GM12878 (cell line): ENCODE measurements at regions of chr7 and their contacts with region 1.

Region 1: DNA sequence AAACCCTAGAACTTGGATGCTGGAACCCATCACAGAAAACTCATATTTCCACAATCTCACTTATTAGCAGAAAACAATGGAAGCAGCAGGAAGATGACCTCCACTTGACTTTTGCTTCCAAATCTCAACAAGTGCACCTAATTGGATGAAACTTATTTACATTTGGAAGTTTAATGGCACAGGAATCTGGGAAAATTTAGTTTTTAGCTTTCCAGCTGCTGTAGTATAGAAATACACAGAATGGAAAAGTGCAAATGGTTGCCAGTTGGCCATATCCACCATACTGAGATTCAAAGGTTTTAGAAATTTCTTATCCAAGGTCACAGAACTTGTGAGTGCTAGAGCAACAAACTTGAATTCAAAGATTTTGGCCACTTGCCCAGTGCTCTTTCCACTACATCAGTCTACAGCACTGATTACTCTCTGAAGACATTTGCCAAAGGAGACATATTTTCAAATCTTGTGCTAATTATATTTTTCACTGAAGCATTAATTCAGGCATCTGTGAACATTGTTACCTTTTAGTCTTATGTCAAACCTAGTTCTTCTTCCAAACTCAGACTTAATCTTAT is 9.3 kb upstream of the AHR start:
- DNase-seq: no peak
- ATAC-seq: no peak
- H3K4me3 ChIP-seq: no peak overlapping the region
- H3K27ac ChIP-seq: no peak overlapping the region
- H3K4me1 ChIP-seq: no peaks in the 10 kb centered on the region
- H3K27me3 ChIP-seq: no peaks in the 10 kb centered on the region
- CTCF ChIP-seq: no peak
- EP300 ChIP-seq: no peak
- POLR2A ChIP-seq: no peak
- RAD21 ChIP-seq: no peak

Region 2: GRCh38 chr7:17275749-17276671 is 13.2 kb before region 1 on chr7:
- CTCF ChIA-PET with region 1: interaction called, 4 read pairs
- POLR2A ChIA-PET with region 1: no interaction called
- RAD21 ChIA-PET with region 1: no interaction called
- SMC1A ChIA-PET with region 1: interaction called, 12 read pairs
- in situ Hi-C with region 1: no loop called
- intact Hi-C with region 1: no loop called
- DNase-seq: no peak
- ATAC-seq: no peak
- H3K4me3 ChIP-seq: no peak overlapping the region
- H3K27ac ChIP-seq: no peak overlapping the region
- H3K4me1 ChIP-seq: no peaks in the 10 kb centered on the region
- H3K27me3 ChIP-seq: no peaks in the 10 kb centered on the region
- CTCF ChIP-seq: no peak
- EP300 ChIP-seq: no peak
- POLR2A ChIP-seq: no peak
- RAD21 ChIP-seq: no peak